ENCODE measurements at regions of chr17 and their contacts with region 1.

Region 1: DNA sequence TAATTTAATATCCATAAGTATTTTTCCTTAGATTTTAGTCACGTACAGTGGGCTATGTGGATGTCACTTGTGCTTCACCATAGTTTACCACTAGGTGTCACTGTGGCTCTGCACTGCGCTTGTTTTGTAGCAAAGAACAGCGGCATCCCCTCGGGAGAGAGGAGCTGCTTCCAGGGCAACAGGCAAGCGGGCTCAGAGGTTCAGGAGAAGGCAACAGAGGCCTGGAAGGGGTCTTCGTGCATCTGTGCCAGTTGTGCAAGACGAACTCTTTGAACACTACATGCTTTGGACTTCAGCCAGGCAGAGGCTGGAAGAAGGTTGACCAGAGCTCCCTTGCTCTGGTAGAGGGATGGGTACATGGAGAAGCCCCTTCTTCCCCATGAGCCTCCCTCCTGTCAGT is 20.6 kb downstream of the CYB561 start:
- DNase-seq: no peak
- H3K4me3 ChIP-seq: no peak overlapping the region
- CTCF ChIP-seq: peak; percentile 77

Region 2: GRCh38 chr17:63412234-63412633 is 13.2 kb before region 1 on chr17:
- CTCF ChIA-PET with region 1: interaction called, 58 read pairs
- POLR2A ChIA-PET with region 1: no interaction called
- DNase-seq: no peak
- H3K4me3 ChIP-seq: no peak overlapping the region
- CTCF ChIP-seq: no peak

Region 3: DNA sequence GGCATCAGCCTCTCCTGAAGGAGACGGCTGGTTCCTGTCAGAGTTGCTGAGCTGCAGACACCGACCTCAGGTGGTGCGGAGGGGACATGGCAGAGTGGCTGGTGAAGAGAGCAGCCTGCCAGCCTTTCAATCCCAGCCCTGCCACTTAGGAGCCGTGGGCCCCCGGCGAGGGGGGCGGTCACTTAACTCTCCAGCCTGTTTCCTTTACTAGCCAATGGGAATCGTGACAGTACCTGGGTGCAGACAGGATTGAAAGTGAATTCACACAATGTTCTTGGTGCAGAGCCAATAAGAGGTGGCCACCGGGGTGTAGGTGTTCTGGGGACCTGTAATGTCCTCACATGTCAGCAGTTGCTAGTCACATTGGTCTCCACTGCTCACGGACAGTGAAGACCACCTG is 64.8 kb after region 1 on chr17:
- CTCF ChIA-PET with region 1: interaction called, 15 read pairs
- POLR2A ChIA-PET with region 1: no interaction called
- DNase-seq: no peak
- H3K4me3 ChIP-seq: no peak overlapping the region
- CTCF ChIP-seq: no peak

Region 4: DNA sequence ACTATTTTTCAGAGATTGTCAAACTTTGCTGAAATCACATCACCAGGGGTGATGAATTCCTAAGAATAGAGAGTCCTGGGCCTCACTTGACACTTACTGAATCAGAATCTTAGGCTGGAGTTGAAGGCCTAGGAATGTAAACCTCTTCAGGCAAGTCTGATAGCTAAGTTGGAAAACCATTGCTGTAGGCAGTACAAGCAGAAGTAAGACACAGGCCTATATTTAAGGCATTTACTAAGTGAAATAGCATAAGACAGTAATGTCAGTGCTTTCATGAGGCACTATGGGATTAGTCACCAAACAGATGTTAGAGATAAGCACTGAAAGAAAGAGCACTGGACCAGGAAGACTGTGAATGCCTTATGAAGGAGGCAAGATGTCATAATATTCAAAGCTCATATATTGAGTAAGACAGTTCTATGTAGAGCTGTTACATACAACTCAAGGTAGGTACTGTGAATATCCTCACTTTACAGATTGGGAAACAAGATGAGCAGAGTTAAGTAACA is 146.3 kb after region 1 on chr17:
- CTCF ChIA-PET with region 1: interaction called, 42 read pairs
- POLR2A ChIA-PET with region 1: no interaction called
- DNase-seq: peak; percentile 31
- H3K4me3 ChIP-seq: no peak overlapping the region
- CTCF ChIP-seq: no peak

Region 5: GRCh38 chr17:63600569-63601438 is 175.3 kb after region 1 on chr17 and contains the start of gene TACO1:
- CTCF ChIA-PET with region 1: interaction called, 398 read pairs
- POLR2A ChIA-PET with region 1: interaction called, 4 read pairs
- DNase-seq: peak; percentile 26
- H3K4me3 ChIP-seq: peak within 1 kb of the TSS; percentile 89
- CTCF ChIP-seq: no peak

Measured in AG04449 (cell line).